HCT116 (cell line): ENCODE measurements at regions of chr1 and their contacts with region 1.

Region 1: DNA sequence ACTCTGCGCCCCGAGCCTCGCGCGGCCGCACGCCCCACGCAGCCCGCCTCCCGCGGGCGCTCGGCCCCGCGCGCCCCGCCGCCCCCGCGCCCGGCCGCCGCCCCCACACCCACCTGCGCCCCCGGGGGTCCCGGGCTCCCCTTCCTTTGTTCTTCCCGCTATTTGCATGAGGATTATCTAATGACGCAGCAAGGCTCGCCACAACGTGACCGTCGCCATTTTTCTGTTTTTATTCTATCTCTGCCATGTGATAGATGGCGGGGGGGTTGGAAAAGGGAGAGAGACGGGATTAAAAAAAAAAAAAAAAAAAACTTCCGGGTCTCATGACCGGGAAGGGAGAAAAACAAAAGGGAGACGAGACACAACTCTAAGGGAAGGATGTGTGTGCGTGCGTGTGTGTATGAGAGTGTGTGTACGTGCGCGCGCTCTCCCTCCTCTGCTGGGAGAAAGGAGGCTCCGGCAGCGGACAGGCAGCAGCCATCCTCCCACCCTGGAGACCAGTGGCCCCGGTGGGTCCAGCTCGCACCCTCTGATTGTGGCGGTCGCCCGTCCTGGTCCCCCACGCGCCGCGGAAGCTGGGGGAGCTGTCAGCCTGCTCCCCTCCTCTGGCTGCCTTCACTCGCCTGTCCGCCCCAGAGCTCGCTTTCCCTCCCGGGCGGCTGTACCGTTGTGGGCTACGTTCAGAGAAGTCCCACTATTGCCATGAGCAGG is 80.4 kb upstream of the AK4 start:
- DNase-seq: peak; percentile 46
- ATAC-seq: peak; percentile 34
- H3K4me3 ChIP-seq: peak overlapping the region; percentile 68 to 76
- H3K27ac ChIP-seq: peak overlapping the region; percentile 94
- H3K4me1 ChIP-seq: peaks cover 10 to 23% of the 10 kb centered on the region in 2 experiments; a peak in 3 of 4 replicates
- H3K27me3 ChIP-seq: no peaks in the 10 kb centered on the region
- CTCF ChIP-seq: no peak
- POLR2A ChIP-seq: no peak
- RAD21 ChIP-seq: no peak

Region 2: GRCh38 chr1:65148548-65149350 is 81.1 kb after region 1 on chr1:
- CTCF ChIA-PET with region 1: no interaction called
- POLR2A ChIA-PET with region 1: no interaction called
- RAD21 ChIA-PET with region 1: no interaction called
- intact Hi-C with region 1: loop called (anchors 10 kb)
- DNase-seq: no peak
- ATAC-seq: peak; percentile 73
- H3K4me3 ChIP-seq: peak overlapping the region; percentile 70 to 87
- H3K27ac ChIP-seq: peak overlapping the region; percentile 68
- H3K4me1 ChIP-seq: peaks cover 9 to 31% of the 10 kb centered on the region in 2 experiments
- H3K27me3 ChIP-seq: no peaks in the 10 kb centered on the region
- CTCF ChIP-seq: no peak
- POLR2A ChIP-seq: no peak
- RAD21 ChIP-seq: no peak

Region 3: GRCh38 chr1:65209005-65209885 is 141.6 kb after region 1 on chr1:
- CTCF ChIA-PET with region 1: interaction called, 11 read pairs
- POLR2A ChIA-PET with region 1: interaction called, 3 read pairs
- RAD21 ChIA-PET with region 1: no interaction called
- intact Hi-C with region 1: loop called (anchors 2 kb)
- DNase-seq: peak; percentile 31
- ATAC-seq: peak; percentile 85
- H3K4me3 ChIP-seq: no peak overlapping the region
- H3K27ac ChIP-seq: no peak overlapping the region
- H3K4me1 ChIP-seq: no peaks in the 10 kb centered on the region
- H3K27me3 ChIP-seq: no peaks in the 10 kb centered on the region
- CTCF ChIP-seq: peak; percentile 43 to 67 (median 59); a peak in 5 of 6 replicates
- POLR2A ChIP-seq: no peak
- RAD21 ChIP-seq: peak; percentile 62